ENCODE measurements at regions of chr22 and their contacts with region 1.

Region 1: DNA sequence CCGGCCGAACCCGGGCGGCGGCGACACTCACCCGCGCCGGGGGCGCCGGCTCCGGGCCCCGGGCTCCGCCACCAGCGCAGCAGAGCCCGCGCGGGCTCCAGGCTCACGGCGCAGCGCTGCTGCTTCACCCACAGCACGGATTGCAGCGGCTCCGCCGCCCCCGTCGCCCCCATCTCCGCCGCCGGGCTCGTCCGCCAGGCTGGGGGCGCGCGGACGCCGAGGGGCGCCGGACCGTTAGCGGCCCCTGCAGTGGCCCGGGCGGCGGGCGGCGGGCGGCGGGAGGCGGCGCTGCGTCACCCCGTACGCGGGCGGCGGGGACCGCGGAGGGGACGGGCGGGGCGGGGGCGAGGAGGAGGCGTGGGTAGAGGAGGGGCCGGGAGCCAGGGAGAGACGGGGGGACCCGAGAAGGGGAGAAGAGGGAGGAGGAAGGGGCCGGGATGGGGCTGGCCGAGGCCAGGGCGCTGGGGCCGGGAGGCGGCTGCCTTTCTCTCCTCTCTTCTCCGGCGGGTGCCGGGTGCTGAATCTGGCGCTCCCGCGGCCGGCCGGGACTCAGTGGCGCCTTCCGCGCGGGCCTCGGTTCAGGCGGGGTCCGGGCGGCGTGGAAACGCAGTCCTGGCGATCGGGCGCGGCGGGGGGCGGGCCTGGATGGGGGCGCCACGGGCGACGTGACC is at the start of gene CERK:
- DNase-seq: peak; percentile 46 to 79 (median 57)
- ATAC-seq: peak; percentile 72
- H3K4me3 ChIP-seq: peak within 1 kb of the TSS; percentile 82
- H3K4me3 Mint-ChIP-seq: peak within 1 kb of the TSS; percentile 97 to 100 (median 99)
- H3K27ac ChIP-seq: peak within 1 kb of the TSS; percentile 86
- H3K27ac Mint-ChIP-seq: peak within 1 kb of the TSS; percentile 93 to 100 (median 98)
- H3K4me1 ChIP-seq: peaks cover 38 to 41% of the 10 kb centered on the region in 2 donors
- H3K4me1 Mint-ChIP-seq: peaks cover 34 to 52% (median 41%) of the 10 kb centered on the region in 7 donors
- H3K27me3 ChIP-seq: no peaks in the 10 kb centered on the region
- H3K27me3 Mint-ChIP-seq: no peaks in the 10 kb centered on the region
- total RNA-seq, gene CERK: 55.8 to 138 (median 72.4) TPM

Region 2: DNA sequence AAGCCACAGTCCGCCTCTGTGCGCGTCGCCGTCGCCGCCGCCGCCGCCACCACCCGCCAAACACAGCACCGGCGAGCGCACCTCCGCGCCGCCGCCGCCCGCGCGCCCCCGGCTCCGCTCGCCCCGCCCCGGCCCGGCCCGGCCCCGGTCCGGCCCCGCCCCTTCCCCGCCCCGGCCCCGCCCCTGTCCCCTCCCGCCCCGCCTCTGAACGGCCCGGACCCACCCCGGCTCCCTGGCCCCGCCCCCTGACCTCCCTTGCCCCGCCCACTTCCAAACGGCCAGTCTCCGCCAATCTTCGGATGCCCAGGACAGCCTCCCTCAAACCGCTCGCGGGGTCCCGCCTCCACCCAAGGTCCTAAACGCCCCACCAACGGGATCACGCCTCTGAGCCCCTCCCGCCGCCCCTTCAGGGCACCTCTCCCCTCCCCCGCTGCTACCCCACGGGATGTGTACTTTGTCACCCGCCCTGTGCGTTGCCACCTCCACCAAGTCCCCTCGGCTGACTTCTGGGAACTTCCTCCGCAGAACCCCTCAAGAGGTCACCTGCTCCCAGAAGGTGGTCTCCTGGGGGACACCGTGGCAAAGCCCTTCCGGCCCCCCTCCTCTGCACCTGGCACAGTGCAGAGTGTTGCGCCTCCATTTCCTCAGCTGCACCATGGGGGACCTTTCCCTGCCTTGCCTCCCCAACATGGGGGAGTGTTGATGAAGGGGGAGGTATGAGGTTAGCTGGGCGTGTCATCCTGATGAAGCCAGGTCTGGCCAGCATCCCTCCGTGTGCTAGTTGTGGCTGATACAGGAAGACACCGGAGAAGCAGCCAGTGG is 1497.1 kb before region 1 on chr22 and contains the start of gene KIAA0930:
- CTCF ChIA-PET with region 1: no interaction called
- POLR2A ChIA-PET with region 1: no interaction called
- intact Hi-C with region 1: loop called in 1 of 2 experiments (anchors 10 kb)
- DNase-seq: peak; percentile 62 to 84 (median 74)
- ATAC-seq: peak; percentile 90
- H3K4me3 ChIP-seq: peak within 1 kb of the TSS; percentile 60
- H3K4me3 Mint-ChIP-seq: peak within 1 kb of the TSS; percentile 85 to 99 (median 94)
- H3K27ac ChIP-seq: peak within 1 kb of the TSS; percentile 66
- H3K27ac Mint-ChIP-seq: peak within 1 kb of the TSS; percentile 72 to 93 (median 87)
- H3K4me1 ChIP-seq: peaks cover 11 to 17% of the 10 kb centered on the region in 2 donors
- H3K4me1 Mint-ChIP-seq: peaks cover 18 to 40% (median 32%) of the 10 kb centered on the region in 7 donors
- H3K27me3 ChIP-seq: no peaks in the 10 kb centered on the region
- H3K27me3 Mint-ChIP-seq: peaks cover 0 to 2% (median 0%) of the 10 kb centered on the region in 5 donors
- total RNA-seq, gene KIAA0930: 13.2 to 58.2 (median 27.9) TPM

Region 3: DNA sequence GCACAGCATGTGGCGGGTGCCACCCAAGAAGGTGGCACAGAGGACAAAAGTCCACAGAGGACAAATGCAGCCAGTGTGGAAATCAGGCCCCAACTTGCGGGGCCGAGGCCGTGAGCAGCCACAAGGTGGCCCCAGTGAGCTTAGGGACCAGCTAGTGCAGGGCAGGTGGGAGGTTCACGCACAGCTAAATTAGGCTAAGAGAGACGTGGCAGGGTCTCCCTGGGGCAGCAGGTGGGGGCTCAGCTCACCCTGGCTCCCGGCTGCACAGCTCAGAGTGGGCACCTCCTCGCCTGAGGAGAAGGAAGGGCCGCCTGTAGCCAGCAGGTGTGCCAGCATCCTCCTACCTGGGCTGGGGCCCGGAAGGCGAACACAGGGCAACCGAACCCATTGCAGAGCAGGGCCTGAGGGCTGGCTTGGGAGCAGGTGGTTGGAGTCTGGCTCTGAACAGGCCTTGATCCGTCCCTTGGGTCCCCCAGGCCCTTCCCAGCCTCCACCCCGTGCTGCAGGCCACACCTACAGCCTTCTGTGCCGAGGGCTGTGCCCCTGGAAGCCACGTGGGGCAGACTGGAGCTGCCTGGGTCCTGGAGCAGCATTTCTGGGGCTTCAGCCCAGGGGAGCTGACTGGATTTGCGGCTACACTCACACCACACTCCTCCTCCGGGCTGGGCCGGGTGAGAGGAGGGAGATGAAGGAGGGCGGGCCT is 174.6 kb before region 1 on chr22:
- CTCF ChIA-PET with region 1: no interaction called
- POLR2A ChIA-PET with region 1: no interaction called
- intact Hi-C with region 1: loop called in 1 of 2 experiments (anchors 5 kb)
- DNase-seq: peak; percentile 60 to 82 (median 73)
- ATAC-seq: peak; percentile 94
- H3K4me3 ChIP-seq: peak overlapping the region; percentile 34
- H3K4me3 Mint-ChIP-seq: peak overlapping the region in 6 of 10 donors; percentile 54 to 65 (median 58)
- H3K27ac ChIP-seq: no peak overlapping the region
- H3K27ac Mint-ChIP-seq: peak overlapping the region in 1 of 9 donors; percentile 18
- H3K4me1 ChIP-seq: peaks cover 0 to 5% of the 10 kb centered on the region in 2 donors
- H3K4me1 Mint-ChIP-seq: peaks cover 4 to 11% (median 4%) of the 10 kb centered on the region in 7 donors
- H3K27me3 ChIP-seq: no peaks in the 10 kb centered on the region
- H3K27me3 Mint-ChIP-seq: no peaks in the 10 kb centered on the region

Region 4: DNA sequence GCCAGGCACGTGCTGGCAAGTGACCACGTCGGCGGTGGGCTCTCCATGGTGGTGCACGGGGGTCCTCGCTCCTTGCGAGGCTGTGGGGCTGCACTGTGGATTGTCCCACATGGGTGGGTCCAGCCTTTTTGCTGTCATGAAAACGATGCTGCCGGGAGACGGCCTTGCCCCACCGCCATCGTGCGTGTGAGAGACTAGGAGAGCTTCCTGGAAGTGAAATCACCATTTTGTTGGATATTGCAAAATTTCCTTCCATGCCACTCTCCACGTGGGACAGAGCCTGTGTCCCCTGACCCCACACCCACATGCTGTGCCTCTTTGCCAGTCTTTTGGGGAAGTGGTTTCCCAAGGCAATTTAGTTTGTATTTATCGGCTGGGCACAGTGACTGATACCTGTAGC is 136.1 kb before region 1 on chr22:
- CTCF ChIA-PET with region 1: no interaction called
- POLR2A ChIA-PET with region 1: no interaction called
- intact Hi-C with region 1: no loop called
- DNase-seq: no peak
- ATAC-seq: peak; percentile 65
- H3K4me3 ChIP-seq: no peak overlapping the region
- H3K4me3 Mint-ChIP-seq: peak overlapping the region in 1 of 10 donors; percentile 23
- H3K27ac ChIP-seq: no peak overlapping the region
- H3K27ac Mint-ChIP-seq: no peak overlapping the region
- H3K4me1 ChIP-seq: peaks cover 10 to 12% of the 10 kb centered on the region in 2 donors
- H3K4me1 Mint-ChIP-seq: peaks cover 11 to 19% (median 16%) of the 10 kb centered on the region in 7 donors
- H3K27me3 ChIP-seq: no peaks in the 10 kb centered on the region
- H3K27me3 Mint-ChIP-seq: no peaks in the 10 kb centered on the region

Region 5: DNA sequence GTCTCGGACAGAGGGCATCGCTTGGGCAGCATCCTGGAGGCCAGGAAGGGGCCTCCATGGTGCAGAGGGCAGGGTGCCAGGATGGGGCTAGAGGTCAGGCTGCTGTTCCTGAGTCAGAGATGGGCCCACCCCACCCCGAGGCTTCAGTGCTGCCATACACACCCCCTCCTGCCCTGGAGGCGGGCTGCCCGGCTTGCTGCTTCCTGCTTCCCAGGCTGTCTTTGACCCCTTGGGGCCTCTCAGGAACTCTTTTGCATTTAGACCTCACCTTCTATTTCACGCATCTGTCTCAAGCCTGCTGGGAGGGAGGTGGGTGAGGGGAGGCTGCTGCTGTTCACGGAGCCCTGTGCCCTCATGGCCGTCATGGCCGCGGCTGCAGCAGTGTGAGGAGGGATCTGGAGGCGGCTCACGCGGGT is 124.5 kb before region 1 on chr22:
- CTCF ChIA-PET with region 1: no interaction called
- POLR2A ChIA-PET with region 1: no interaction called
- intact Hi-C with region 1: loop called (anchors 1 kb)
- DNase-seq: peak in 1 of 9 donors; percentile 33
- ATAC-seq: no peak
- H3K4me3 ChIP-seq: peak overlapping the region; percentile 71
- H3K4me3 Mint-ChIP-seq: peak overlapping the region; percentile 88 to 96 (median 92)
- H3K27ac ChIP-seq: no peak overlapping the region
- H3K27ac Mint-ChIP-seq: peak overlapping the region; percentile 72 to 95 (median 85)
- H3K4me1 ChIP-seq: peaks cover 23 to 24% of the 10 kb centered on the region in 2 donors
- H3K4me1 Mint-ChIP-seq: peaks cover 22 to 39% (median 29%) of the 10 kb centered on the region in 7 donors
- H3K27me3 ChIP-seq: no peaks in the 10 kb centered on the region
- H3K27me3 Mint-ChIP-seq: no peaks in the 10 kb centered on the region

Region 6: DNA sequence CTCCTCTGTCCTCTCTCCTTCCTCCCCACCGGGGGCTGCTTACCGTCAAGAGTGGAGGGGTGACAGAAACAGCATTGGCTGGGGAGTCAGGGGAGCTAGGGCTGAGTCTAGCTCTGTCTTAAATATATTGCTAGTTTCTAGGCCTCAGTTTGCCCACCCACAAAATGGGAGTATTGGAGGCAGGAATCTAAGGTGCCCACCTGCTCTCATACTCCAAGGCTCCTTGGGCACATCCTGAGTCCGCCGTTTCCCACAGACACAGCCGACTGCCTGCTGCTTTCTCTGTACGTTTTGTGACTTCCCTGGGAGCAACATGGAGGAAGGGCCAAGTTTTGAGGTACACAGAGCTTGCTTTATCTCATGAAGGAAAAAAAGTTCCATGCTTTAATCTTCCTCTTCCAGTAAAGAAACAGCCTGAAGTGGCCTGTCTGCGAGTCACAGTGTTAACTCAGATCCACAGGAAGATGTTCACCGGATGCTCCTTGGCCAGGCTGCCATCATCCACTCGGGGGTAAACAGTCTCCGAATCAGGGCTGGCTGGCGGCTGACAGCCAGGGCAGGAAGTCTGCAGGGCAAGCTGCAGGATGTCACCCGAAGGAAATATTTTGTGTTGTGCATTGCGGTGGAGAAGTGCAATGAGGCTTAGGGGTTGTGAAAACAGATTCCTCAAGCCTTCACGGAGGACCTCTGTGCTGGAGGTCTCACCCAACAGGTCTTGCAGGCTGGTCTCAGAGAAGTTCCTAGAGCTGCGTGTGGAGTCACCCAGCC is 11.0 kb after region 1 on chr22:
- CTCF ChIA-PET with region 1: interaction called, 19 read pairs
- POLR2A ChIA-PET with region 1: interaction called, 54 read pairs
- intact Hi-C with region 1: loop called in 1 of 2 experiments (anchors 1 kb)
- DNase-seq: peak in 8 of 9 donors; percentile 35 to 83 (median 74)
- ATAC-seq: peak; percentile 64
- H3K4me3 ChIP-seq: peak overlapping the region; percentile 54
- H3K4me3 Mint-ChIP-seq: peak overlapping the region; percentile 63 to 87 (median 81)
- H3K27ac ChIP-seq: peak overlapping the region; percentile 66
- H3K27ac Mint-ChIP-seq: peak overlapping the region; percentile 87 to 99 (median 96)
- H3K4me1 ChIP-seq: peaks cover 29% of the 10 kb centered on the region in 2 donors
- H3K4me1 Mint-ChIP-seq: peaks cover 23 to 34% (median 28%) of the 10 kb centered on the region in 7 donors
- H3K27me3 ChIP-seq: no peaks in the 10 kb centered on the region
- H3K27me3 Mint-ChIP-seq: peaks cover 0 to 3% (median 0%) of the 10 kb centered on the region in 5 donors

Region 7: GRCh38 chr22:46791201-46791731 is 53.2 kb after region 1 on chr22:
- CTCF ChIA-PET with region 1: interaction called, 11 read pairs
- POLR2A ChIA-PET with region 1: interaction called, 11 read pairs
- intact Hi-C with region 1: loop called in 1 of 2 experiments (anchors 1 kb)
- DNase-seq: peak; percentile 51 to 90 (median 81)
- ATAC-seq: peak; percentile 97
- H3K4me3 ChIP-seq: peak overlapping the region; percentile 33
- H3K4me3 Mint-ChIP-seq: peak overlapping the region; percentile 54 to 90 (median 84)
- H3K27ac ChIP-seq: peak overlapping the region; percentile 81
- H3K27ac Mint-ChIP-seq: peak overlapping the region; percentile 99 to 100 (median 100)
- H3K4me1 ChIP-seq: peaks cover 30 to 35% of the 10 kb centered on the region in 2 donors
- H3K4me1 Mint-ChIP-seq: peaks cover 27 to 62% (median 49%) of the 10 kb centered on the region in 7 donors
- H3K27me3 ChIP-seq: no peaks in the 10 kb centered on the region
- H3K27me3 Mint-ChIP-seq: no peaks in the 10 kb centered on the region

Region 8: DNA sequence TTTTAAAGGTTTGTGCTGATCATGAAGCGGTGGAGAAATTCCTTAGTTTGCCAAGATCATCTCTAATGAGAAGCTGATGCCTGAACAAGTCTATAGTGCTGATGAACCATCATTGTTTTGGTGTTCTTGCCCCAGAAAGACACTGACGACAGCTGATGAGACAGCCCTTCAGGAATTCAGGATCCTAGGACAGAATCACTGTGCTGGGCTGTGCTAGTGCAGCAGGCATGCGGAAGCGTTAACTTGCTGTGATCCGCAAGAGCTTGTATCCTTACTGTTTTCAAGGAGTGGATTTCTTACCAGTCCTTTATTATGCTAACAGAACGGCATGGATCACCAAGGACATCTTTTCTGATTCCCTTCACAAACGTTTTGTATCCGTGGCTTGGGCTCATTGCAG is 128.5 kb after region 1 on chr22:
- CTCF ChIA-PET with region 1: no interaction called
- POLR2A ChIA-PET with region 1: no interaction called
- intact Hi-C with region 1: no loop called
- DNase-seq: no peak
- ATAC-seq: no peak
- H3K4me3 ChIP-seq: no peak overlapping the region
- H3K4me3 Mint-ChIP-seq: no peak overlapping the region
- H3K27ac ChIP-seq: no peak overlapping the region
- H3K27ac Mint-ChIP-seq: no peak overlapping the region
- H3K4me1 ChIP-seq: no peaks in the 10 kb centered on the region
- H3K4me1 Mint-ChIP-seq: peaks cover 3 to 20% (median 10%) of the 10 kb centered on the region in 7 donors
- H3K27me3 ChIP-seq: no peaks in the 10 kb centered on the region
- H3K27me3 Mint-ChIP-seq: no peaks in the 10 kb centered on the region

Region 9: DNA sequence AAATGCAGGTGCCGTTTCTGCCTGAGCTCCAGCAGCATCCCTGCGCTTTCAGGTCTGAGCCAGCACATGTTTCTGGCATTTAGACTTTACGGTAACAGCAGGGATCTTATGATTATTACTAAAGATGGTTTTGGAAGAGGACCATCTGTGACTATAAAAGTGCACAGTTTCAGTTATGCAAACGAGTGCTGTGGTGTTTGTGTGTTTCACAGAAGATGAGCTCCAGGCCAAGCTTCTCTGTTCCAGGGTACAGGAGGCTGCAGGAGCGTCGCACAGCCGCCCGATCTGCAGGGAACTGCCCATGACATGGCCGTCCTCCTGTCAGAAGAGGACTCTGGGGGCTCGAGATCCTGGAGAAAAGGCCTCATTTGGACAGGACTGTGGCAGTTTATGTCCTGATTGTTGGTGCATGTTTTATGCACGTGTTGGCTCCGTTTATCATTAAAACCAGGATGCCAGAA is 321.6 kb after region 1 on chr22:
- CTCF ChIA-PET with region 1: no interaction called
- POLR2A ChIA-PET with region 1: no interaction called
- intact Hi-C with region 1: no loop called
- DNase-seq: no peak
- ATAC-seq: no peak
- H3K4me3 ChIP-seq: no peak overlapping the region
- H3K4me3 Mint-ChIP-seq: no peak overlapping the region
- H3K27ac ChIP-seq: no peak overlapping the region
- H3K27ac Mint-ChIP-seq: peak overlapping the region in 1 of 9 donors; percentile 49
- H3K4me1 ChIP-seq: no peaks in the 10 kb centered on the region
- H3K4me1 Mint-ChIP-seq: peaks cover 0 to 15% (median 6%) of the 10 kb centered on the region in 7 donors
- H3K27me3 ChIP-seq: no peaks in the 10 kb centered on the region
- H3K27me3 Mint-ChIP-seq: no peaks in the 10 kb centered on the region